Panc1 (cell line): ENCODE measurements at regions of chr12 and their contacts with region 1.

Region 1: GRCh38 chr12:131333621-131334367 is 377.1 kb upstream of the SFSWAP start:
- DNase-seq: no peak
- ATAC-seq: no peak
- H3K4me3 ChIP-seq: no peak overlapping the region
- H3K27ac ChIP-seq: no peak overlapping the region
- H3K4me1 ChIP-seq: no peaks in the 10 kb centered on the region
- H3K27me3 ChIP-seq: no peaks in the 10 kb centered on the region
- CTCF ChIP-seq: no peak

Region 2: DNA sequence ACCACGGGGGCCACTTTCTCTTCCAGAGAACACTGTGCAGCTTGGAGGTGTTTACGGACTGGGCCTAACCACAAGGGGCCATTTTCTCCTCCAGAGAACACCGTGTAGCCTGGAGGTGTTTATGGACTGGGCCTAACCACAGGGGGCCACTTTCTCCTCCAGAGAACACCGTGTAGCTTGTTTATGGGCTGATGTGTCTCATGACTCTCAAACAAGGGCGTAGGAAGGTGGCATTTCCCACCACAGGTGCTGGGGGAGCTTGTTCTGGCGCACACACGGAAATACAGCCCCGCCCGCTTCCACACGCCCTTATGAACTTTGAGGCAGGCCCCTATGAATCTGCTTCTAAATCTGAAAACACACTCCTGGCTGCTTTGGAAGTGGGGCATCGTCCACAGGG is 202.5 kb after region 1 on chr12:
- CTCF ChIA-PET with region 1: no interaction called
- POLR2A ChIA-PET with region 1: no interaction called
- in situ Hi-C with region 1: no loop called
- intact Hi-C with region 1: no loop called
- DNase-seq: no peak
- ATAC-seq: no peak
- H3K4me3 ChIP-seq: no peak overlapping the region
- H3K27ac ChIP-seq: no peak overlapping the region
- H3K4me1 ChIP-seq: no peaks in the 10 kb centered on the region
- H3K27me3 ChIP-seq: peaks cover 8% of the 10 kb centered on the region; the same call in 1 of the 2 replicates
- CTCF ChIP-seq: no peak

Region 3: GRCh38 chr12:131634037-131634436 is 300.2 kb after region 1 on chr12:
- CTCF ChIA-PET with region 1: no interaction called
- POLR2A ChIA-PET with region 1: no interaction called
- in situ Hi-C with region 1: no loop called
- intact Hi-C with region 1: loop called (anchors 5 kb)
- DNase-seq: no peak
- ATAC-seq: no peak
- H3K4me3 ChIP-seq: no peak overlapping the region
- H3K27ac ChIP-seq: no peak overlapping the region
- H3K4me1 ChIP-seq: no peaks in the 10 kb centered on the region
- H3K27me3 ChIP-seq: no peaks in the 10 kb centered on the region
- CTCF ChIP-seq: no peak